Left cardiac atrium (tissue), 4 donors: ENCODE measurements at regions of chr3 and their contacts with region 1.

Region 1: DNA sequence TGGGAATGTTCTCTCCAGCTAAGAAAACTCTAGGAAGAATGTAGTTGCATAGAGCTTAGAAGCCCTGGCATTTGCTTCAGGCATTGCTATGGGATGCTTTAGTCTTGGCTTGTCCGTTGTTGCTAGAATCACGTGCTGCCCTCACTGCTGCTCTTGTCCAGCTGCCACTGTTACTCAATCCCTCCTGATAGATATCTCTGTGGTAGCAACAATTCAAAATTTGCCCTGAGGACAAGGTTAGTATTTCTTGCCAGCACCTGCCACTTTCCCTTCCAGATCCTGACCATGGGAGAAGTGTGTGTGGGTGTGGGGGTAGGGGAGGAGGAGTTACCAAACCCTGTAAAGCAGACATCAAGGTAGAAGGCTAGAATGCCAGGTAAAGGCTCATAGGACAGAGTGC is 113.8 kb downstream of the PPM1L start:
- DNase-seq: peak; percentile 20
- ATAC-seq: peak; percentile 78 to 84

Region 2: GRCh38 chr3:160804762-160805161 is 65.1 kb before region 1 on chr3:
- intact Hi-C with region 1: loop called in 1 of 2 experiments (anchors 5 kb)
- DNase-seq: peak; percentile 60
- ATAC-seq: peak; percentile 74

Region 3: GRCh38 chr3:160921020-160921635 is 51.3 kb after region 1 on chr3:
- intact Hi-C with region 1: no loop called
- DNase-seq: peak; percentile 33
- ATAC-seq: peak; percentile 77 to 82